Gastrocnemius medialis (tissue), 4 donors: ENCODE measurements at regions of chr9 and their contacts with region 1.

Region 1: GRCh38 chr9:73093740-73094379 is 57.8 kb upstream of the ANXA1 start:
- DNase-seq: no peak
- ATAC-seq: peak in 1 of 2 donors; percentile 56
- H3K4me3 ChIP-seq: peak overlapping the region; percentile 24 to 33 (median 30)
- H3K27ac ChIP-seq: no peak overlapping the region
- H3K4me1 ChIP-seq: no peaks in the 10 kb centered on the region
- H3K27me3 ChIP-seq: no peaks in the 10 kb centered on the region
- CTCF ChIP-seq: no peak
- POLR2A ChIP-seq: no peak

Region 2: GRCh38 chr9:72473474-72474261 is 620.2 kb before region 1 on chr9:
- in situ Hi-C with region 1: no loop called
- intact Hi-C with region 1: no loop called
- DNase-seq: no peak
- ATAC-seq: no peak
- H3K4me3 ChIP-seq: no peak overlapping the region
- H3K27ac ChIP-seq: no peak overlapping the region
- H3K4me1 ChIP-seq: peaks cover 6 to 18% of the 10 kb centered on the region in 2 donors
- H3K27me3 ChIP-seq: no peaks in the 10 kb centered on the region
- CTCF ChIP-seq: no peak
- POLR2A ChIP-seq: no peak

Region 3: GRCh38 chr9:73039271-73040263 is 54.3 kb before region 1 on chr9:
- in situ Hi-C with region 1: loop called in 1 of 4 experiments (anchors 10 kb)
- intact Hi-C with region 1: no loop called
- DNase-seq: peak; percentile 11 to 25
- ATAC-seq: peak; percentile 57 to 72
- H3K4me3 ChIP-seq: no peak overlapping the region
- H3K27ac ChIP-seq: peak overlapping the region in 3 of 4 donors; percentile 47 to 66 (median 56)
- H3K4me1 ChIP-seq: peaks cover 0 to 17% of the 10 kb centered on the region in 2 donors
- H3K27me3 ChIP-seq: no peaks in the 10 kb centered on the region
- CTCF ChIP-seq: no peak
- POLR2A ChIP-seq: no peak